ENCODE measurements at regions of chr5 and their contacts with region 1.

Region 1: DNA sequence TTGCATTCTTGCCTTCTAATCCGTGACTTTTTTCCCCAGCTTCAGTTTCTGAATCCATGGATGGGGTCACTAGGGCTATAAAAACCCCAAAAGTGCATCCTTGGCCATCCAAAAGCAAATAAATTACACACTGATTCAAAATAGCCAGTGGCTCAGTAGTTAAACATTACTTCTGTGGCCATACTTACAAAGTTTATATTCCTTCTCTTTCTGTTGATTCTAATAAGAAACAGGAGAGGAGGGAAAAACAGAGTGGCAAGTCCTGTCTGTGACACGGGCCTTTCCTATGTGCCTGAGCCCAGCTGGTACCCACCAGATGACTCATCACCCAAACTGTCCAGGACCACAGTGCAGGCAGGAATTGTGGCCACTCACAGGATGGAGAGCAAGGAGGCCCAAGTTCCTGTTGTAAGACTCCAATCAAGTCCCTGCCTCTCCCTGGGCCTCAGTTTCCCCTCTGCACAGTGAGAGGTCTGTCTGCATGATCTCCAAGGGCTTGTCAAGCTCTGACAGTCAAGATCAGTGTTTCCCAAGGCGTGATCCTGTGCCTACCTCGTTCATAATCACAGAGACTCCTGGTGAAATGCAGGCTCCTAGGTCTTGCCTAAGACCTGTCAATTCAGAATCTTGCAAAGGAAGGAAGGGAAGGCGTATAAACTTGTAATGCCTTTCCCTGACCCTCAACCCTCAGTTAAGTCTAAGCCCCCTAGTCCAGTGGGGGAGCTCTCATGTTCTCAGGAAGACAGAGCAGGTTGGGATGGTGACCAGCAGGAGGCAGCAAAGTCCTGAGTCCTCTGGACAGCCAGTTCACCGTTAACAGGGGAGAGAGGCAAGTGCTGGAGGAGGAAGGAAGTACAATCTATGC is 29.5 kb downstream of the TNIP1 start:
- DNase-seq: peak; percentile 79
- CTCF ChIP-seq: peak; percentile 76

Region 2: DNA sequence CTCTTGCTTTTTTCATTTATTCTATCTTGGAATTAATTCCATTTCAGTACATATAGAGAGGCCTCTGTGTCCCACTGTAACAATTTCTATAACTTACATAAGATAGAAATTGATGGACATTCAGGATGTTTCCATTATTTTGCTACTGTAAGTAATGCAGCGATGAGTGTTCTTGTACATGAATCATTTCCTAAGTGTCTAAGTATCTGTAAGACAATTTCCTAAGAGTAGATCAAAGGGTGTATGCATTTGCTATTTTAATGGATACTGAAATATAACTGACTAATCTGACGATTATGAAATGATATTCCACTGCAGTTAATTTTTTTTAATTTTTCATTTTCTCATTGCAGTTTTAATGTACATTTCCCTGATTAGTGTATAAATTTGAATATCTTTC is 327.5 kb before region 1 on chr5:
- CTCF ChIA-PET with region 1: no interaction called
- POLR2A ChIA-PET with region 1: no interaction called
- DNase-seq: no peak
- CTCF ChIP-seq: no peak

Region 3: GRCh38 chr5:151063142-151063949 is 12.0 kb after region 1 on chr5:
- CTCF ChIA-PET with region 1: interaction called, 90 read pairs
- POLR2A ChIA-PET with region 1: no interaction called
- DNase-seq: no peak
- CTCF ChIP-seq: no peak

Region 4: DNA sequence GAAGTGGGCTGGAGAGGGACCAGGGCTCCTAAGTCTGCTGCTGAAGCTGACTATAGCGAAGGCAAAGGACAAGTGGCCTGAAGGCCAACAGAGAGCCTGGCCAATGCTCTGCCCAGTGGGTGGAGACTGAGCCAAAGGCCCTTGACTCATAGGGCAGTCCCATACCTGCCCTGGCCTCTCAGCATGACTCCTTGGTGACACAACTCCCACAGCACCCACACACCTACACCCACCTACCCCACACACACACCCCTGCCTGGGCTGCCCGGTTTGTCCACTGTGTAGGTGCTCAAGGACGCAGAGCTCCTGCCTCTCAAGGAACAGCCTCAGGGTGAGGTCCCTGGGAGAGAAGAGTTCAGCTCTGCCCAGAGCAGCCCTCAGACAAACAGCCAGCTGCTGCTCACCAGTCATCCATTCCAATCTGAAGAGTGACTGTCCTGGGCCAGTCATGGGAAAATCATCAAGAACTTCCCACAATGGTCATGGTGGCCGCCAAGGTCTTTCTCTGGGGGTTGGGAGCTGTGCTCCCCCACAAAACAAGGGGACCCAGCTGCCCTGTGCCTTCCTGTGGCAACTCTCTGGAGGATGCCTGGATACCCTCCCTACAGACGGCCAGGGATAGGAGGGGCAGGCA is 24.5 kb after region 1 on chr5:
- CTCF ChIA-PET with region 1: interaction called, 90 read pairs
- POLR2A ChIA-PET with region 1: no interaction called
- DNase-seq: no peak
- CTCF ChIP-seq: no peak

Region 5: GRCh38 chr5:151093476-151093889 is 42.2 kb after region 1 on chr5:
- CTCF ChIA-PET with region 1: interaction called, 19 read pairs
- POLR2A ChIA-PET with region 1: no interaction called
- DNase-seq: no peak
- CTCF ChIP-seq: no peak

Region 6: DNA sequence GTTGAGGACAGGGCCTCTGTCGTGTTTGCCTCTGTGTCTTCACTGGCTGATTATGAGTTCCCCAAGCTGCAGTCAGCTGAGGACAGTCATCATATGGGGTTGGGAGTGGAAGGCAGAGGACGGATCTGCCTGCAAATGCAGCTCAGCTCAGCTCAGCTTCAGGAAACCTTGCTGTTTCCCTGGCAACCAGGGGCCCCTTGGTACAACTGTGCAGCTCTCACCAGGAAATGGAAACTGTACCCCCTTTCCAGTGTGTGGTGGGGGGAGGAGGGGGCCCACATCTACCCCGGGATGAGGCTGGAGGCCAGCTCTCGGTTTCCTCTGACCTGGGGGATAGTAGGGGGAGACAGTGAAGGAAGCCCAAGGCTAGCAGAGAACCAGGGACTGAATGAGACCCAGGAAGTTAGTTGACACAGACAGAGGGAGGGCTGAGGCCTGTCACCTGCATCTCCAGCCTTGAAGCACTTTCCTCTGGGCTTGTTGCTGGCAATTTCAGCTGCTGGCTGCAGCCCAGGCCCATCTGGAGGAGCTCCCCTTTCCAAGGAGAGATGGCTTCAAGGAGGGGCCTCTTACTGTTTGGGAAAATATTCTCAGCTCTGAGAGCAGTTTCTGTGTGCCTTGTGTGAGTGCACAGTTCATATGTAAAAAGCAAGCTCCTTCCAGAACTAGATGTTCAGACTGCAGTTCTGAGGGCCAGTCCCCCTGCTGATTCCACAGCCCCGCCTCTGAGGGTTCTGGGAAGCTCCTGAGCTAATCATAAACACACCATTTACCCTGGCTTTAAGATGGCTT is 99.4 kb after region 1 on chr5:
- CTCF ChIA-PET with region 1: interaction called, 11 read pairs
- POLR2A ChIA-PET with region 1: no interaction called
- DNase-seq: peak; percentile 54
- CTCF ChIP-seq: no peak

Measured in GM10248 (cell line).